Activated T-helper 1 cell treated with anti-CD3 and anti-CD28 coated beads, Interleukin-12 subunit alpha, Interleukin-12 subunit beta, Interleukin-2, Interleukin-4 antibody, amounts not matched to agents 30 ng/mL and 10 ng/mL and 1 ng/mL, durations not matched to agents 14 hours and 24 hours and 36 hours (primary cell): ENCODE measurements at regions of chr11 and their contacts with region 1.

Region 1: DNA sequence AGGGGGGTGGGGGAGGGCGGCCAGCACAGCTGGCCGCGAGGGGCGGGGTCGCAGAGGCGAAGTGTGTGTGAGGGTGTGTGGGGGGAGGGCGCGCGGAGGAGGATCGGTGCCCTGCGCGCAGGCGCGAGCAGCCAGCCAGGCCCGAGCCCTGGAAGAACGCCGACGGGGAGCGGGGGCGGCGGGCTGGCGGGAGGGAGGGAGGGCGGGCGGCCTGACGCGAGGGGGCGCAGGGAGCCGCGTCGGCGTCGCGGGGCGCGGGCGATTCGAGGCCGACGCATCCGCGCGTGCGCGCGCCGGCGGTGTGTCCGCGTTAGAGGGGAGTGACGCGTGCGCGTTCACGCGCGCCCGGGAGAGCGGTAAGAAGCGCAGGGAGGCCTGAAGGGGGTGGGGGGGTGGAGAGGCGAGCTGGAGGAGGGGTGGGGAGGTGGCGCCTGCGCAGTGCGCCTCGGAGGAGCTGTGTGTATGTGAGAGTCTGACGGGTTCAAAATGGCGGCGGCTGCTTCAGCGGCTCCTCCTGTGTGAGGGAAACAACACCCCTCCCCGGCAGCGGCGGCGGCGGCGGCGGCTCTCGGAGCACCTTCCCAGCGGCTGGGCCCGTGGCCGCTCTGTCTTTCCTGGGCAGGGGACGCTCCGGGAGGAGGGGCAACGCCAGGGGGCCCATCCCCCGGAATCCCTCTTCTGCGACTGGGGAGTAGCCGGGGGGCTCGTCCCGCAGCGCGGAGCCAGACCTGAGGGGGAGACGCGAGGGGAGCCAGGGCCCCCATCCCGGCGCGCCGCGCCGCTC is at the start of gene KDM2A:
- DNase-seq: peak; percentile 95
- H3K4me3 Mint-ChIP-seq: peak within 1 kb of the TSS; percentile 99
- H3K27ac Mint-ChIP-seq: peak within 1 kb of the TSS; percentile 92
- H3K4me1 Mint-ChIP-seq: peaks cover 23% of the 10 kb centered on the region
- H3K27me3 Mint-ChIP-seq: peaks cover 12% of the 10 kb centered on the region
- total RNA-seq, gene KDM2A: 114 and 119 TPM in 2 replicates

Region 2: GRCh38 chr11:66744485-66745340 is 374.3 kb before region 1 on chr11:
- intact Hi-C with region 1: loop called (anchors 10 kb)
- DNase-seq: peak; percentile 91
- H3K4me3 Mint-ChIP-seq: peak overlapping the region; percentile 90
- H3K27ac Mint-ChIP-seq: peak overlapping the region; percentile 80
- H3K4me1 Mint-ChIP-seq: no peaks in the 10 kb centered on the region
- H3K27me3 Mint-ChIP-seq: peaks cover 2% of the 10 kb centered on the region

Region 3: GRCh38 chr11:67010323-67010905 is 108.6 kb before region 1 on chr11:
- intact Hi-C with region 1: no loop called
- DNase-seq: no peak
- H3K4me3 Mint-ChIP-seq: no peak overlapping the region
- H3K27ac Mint-ChIP-seq: no peak overlapping the region
- H3K4me1 Mint-ChIP-seq: no peaks in the 10 kb centered on the region
- H3K27me3 Mint-ChIP-seq: peaks cover 11% of the 10 kb centered on the region

Region 4: GRCh38 chr11:67082035-67082791 is 36.8 kb before region 1 on chr11:
- intact Hi-C with region 1: loop called (anchors 2 kb)
- DNase-seq: no peak
- H3K4me3 Mint-ChIP-seq: no peak overlapping the region
- H3K27ac Mint-ChIP-seq: no peak overlapping the region
- H3K4me1 Mint-ChIP-seq: peaks cover 13% of the 10 kb centered on the region
- H3K27me3 Mint-ChIP-seq: no peaks in the 10 kb centered on the region

Region 5: GRCh38 chr11:67095214-67095507 is 23.8 kb before region 1 on chr11:
- intact Hi-C with region 1: no loop called
- DNase-seq: no peak
- H3K4me3 Mint-ChIP-seq: no peak overlapping the region
- H3K27ac Mint-ChIP-seq: no peak overlapping the region
- H3K4me1 Mint-ChIP-seq: peaks cover 5% of the 10 kb centered on the region
- H3K27me3 Mint-ChIP-seq: peaks cover 4% of the 10 kb centered on the region

Region 6: GRCh38 chr11:67167715-67168114 is 48.7 kb after region 1 on chr11:
- intact Hi-C with region 1: loop called (anchors 2 kb)
- DNase-seq: no peak
- H3K4me3 Mint-ChIP-seq: no peak overlapping the region
- H3K27ac Mint-ChIP-seq: no peak overlapping the region
- H3K4me1 Mint-ChIP-seq: peaks cover 37% of the 10 kb centered on the region
- H3K27me3 Mint-ChIP-seq: no peaks in the 10 kb centered on the region